ENCODE measurements at regions of chr11 and their contacts with region 1.

Region 1: GRCh38 chr11:132028380-132029240 is 658.2 kb downstream of the NTM start:
- DNase-seq: peak; percentile 46
- H3K4me3 ChIP-seq: no peak overlapping the region
- H3K27ac ChIP-seq: no peak overlapping the region
- H3K4me1 ChIP-seq: no peaks in the 10 kb centered on the region
- H3K27me3 ChIP-seq: no peaks in the 10 kb centered on the region
- CTCF ChIP-seq: peak in 3 of 5 experiments; percentile 52 to 69 (median 63)
- EP300 ChIP-seq: no peak
- POLR2A ChIP-seq: no peak

Region 2: DNA sequence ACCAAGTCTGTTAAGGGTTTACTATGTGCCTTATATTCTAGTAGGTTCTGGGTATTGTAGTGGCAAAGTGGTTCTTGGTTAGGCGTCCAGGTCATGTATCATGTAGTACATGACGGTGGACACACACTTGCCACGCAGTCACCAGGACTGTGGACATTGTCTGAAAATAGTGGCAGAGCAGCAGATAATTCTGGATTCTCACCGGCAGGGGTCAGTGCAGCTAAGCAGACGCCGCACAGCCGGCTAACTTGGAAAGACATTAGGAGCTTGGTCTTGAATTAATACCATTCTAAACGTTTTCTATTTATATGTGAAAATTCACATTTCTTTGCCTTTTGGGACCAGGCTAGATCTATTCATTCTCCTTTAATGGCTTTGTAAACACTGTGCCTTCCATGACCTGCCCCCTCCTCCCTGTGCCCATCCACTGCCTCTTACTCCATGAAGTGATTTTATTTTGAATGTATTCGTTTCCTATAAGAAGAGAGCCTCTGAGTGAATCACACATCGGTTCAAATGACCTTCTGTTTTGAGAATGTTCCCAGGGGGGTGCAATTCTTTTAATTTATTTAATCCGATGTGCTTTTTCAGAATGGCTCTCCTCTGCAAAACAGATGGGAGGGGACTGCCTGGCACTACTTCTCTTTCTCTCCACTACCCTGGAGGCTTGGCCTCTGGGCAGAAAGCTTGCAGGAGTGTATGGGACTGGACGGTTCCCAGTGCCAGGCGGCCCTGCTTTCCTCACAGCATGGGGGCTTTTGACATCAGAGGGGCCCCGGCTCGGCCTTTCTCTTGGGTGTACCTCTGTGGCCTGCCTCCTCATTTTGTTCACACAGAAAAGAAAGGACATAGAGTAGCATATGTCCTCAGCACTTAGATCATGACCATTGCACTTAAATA is 280.2 kb before region 1 on chr11:
- in situ Hi-C with region 1: loop called in 1 of 4 experiments (anchors 25 kb)
- intact Hi-C with region 1: no loop called
- DNase-seq: peak; percentile 42
- H3K4me3 ChIP-seq: no peak overlapping the region
- H3K27ac ChIP-seq: no peak overlapping the region
- H3K4me1 ChIP-seq: no peaks in the 10 kb centered on the region
- H3K27me3 ChIP-seq: no peaks in the 10 kb centered on the region
- CTCF ChIP-seq: peak; percentile 54 to 70 (median 67)
- EP300 ChIP-seq: no peak
- POLR2A ChIP-seq: no peak

Region 3: DNA sequence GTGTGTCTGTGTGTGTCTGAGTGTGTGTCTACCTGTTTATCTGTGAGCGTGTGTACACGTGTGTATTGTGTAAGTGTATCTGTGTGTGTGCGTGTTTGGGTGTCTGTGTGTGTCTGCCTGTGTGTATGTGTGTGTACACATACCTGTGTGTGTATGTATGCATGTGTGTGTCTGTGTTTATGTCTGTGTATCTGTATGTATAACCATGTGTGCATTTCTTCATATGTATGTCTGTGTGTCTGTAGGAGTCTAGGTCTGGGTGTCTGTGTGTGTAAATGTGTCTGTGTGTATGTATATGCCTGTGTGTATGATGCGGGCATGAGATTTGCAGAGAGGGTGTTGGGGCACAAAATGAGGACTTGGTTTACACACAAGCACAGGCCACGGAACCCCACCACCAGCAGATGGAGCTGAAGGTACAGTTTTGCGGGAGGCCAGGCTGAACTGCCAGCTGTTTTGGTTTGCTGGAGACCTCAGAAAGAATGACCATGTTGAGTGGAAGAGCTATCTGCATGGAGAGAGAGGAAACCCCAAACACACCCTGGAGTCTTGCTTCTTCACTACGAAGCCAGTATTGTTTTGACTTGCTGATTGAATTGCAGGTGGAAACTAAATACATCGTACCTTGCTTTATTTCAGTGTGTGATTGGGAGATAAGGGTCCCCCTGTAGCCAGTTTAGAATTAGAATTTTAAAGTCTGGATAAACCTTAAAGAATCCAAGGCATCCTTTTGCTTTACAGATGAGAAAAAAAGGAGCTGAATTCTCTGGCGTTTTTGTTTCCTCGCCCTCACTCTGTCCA is 161.0 kb before region 1 on chr11:
- in situ Hi-C with region 1: no loop called
- intact Hi-C with region 1: loop called (anchors 5 kb)
- DNase-seq: peak; percentile 47
- H3K4me3 ChIP-seq: no peak overlapping the region
- H3K27ac ChIP-seq: no peak overlapping the region
- H3K4me1 ChIP-seq: no peaks in the 10 kb centered on the region
- H3K27me3 ChIP-seq: no peaks in the 10 kb centered on the region
- CTCF ChIP-seq: peak; percentile 44 to 56 (median 52)
- EP300 ChIP-seq: no peak
- POLR2A ChIP-seq: no peak

Region 4: DNA sequence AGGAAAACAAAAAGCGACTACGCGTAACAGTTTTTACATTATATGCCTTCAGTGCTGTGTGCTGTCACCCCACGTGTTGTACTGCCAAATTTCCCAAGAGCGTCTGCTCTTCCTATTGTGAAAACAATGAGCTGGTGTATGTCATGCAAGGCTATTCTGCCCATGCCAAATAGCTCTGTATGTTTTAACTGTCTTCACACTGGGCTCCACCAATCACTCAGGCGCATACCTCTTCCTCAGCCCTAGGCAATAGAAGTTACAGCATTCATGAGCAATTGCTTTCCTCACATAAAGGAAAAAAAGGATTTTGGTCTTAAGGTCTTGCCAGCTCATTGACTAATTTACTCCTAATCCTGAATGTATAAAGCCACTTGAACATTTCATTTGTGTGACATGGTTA is 51.4 kb before region 1 on chr11:
- in situ Hi-C with region 1: loop called in 1 of 4 experiments (anchors 10 kb)
- intact Hi-C with region 1: no loop called
- DNase-seq: no peak
- H3K4me3 ChIP-seq: no peak overlapping the region
- H3K27ac ChIP-seq: no peak overlapping the region
- H3K4me1 ChIP-seq: no peaks in the 10 kb centered on the region
- H3K27me3 ChIP-seq: no peaks in the 10 kb centered on the region
- CTCF ChIP-seq: no peak
- EP300 ChIP-seq: no peak
- POLR2A ChIP-seq: no peak

Region 5: DNA sequence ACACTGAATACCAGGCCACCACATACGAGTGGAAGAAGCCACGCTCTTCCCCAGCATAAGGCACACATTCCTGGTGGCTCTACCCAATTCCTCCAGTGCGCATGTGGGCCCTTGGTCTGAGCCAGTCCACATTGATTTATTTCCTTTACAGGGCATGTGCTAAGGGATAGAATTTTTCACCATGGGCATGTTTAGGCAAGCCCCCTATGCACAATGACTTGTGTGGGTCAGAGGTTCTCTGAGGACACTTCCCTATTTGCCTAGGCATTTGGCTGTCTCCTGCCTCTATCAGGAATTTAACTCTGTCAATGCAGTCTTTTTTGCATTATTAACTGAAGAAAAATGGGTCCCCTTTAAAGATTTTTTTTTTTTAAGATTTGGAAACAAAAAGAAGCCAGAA is 59.9 kb after region 1 on chr11:
- in situ Hi-C with region 1: no loop called
- intact Hi-C with region 1: no loop called
- DNase-seq: no peak
- H3K4me3 ChIP-seq: no peak overlapping the region
- H3K27ac ChIP-seq: no peak overlapping the region
- H3K4me1 ChIP-seq: no peaks in the 10 kb centered on the region
- H3K27me3 ChIP-seq: no peaks in the 10 kb centered on the region
- CTCF ChIP-seq: no peak
- EP300 ChIP-seq: no peak
- POLR2A ChIP-seq: no peak

Measured in transverse colon (tissue), 4 donors.